Naive thymus-derived CD4-positive, alpha-beta T cell (primary cell): ENCODE measurements at regions of chr11 and their contacts with region 1.

Region 1: GRCh38 chr11:128039140-128040021 is 548.0 kb downstream of the ETS1 start:
- DNase-seq: peak; percentile 25 to 83 (median 74)
- ATAC-seq: peak; percentile 97
- H3K4me3 ChIP-seq: peak overlapping the region; percentile 38
- H3K4me3 Mint-ChIP-seq: peak overlapping the region in 9 of 10 donors; percentile 61 to 79 (median 70)
- H3K27ac ChIP-seq: peak overlapping the region; percentile 49
- H3K27ac Mint-ChIP-seq: peak overlapping the region in 8 of 9 donors; percentile 71 to 94 (median 90)
- H3K4me1 ChIP-seq: peaks cover 68 to 74% of the 10 kb centered on the region in 2 donors
- H3K4me1 Mint-ChIP-seq: peaks cover 25 to 56% (median 41%) of the 10 kb centered on the region in 7 donors
- H3K27me3 ChIP-seq: no peaks in the 10 kb centered on the region
- H3K27me3 Mint-ChIP-seq: peaks cover 0 to 3% (median 0%) of the 10 kb centered on the region in 5 donors

Region 2: GRCh38 chr11:128086794-128087193 is 47.4 kb after region 1 on chr11:
- CTCF ChIA-PET with region 1: interaction called, 37 read pairs
- POLR2A ChIA-PET with region 1: interaction called, 11 read pairs
- intact Hi-C with region 1: loop called in 1 of 2 experiments (anchors 1 kb)
- DNase-seq: peak in 5 of 9 donors; percentile 16 to 38 (median 24)
- ATAC-seq: peak; percentile 40
- H3K4me3 ChIP-seq: no peak overlapping the region
- H3K4me3 Mint-ChIP-seq: peak overlapping the region in 6 of 10 donors; percentile 2 to 55 (median 25)
- H3K27ac ChIP-seq: no peak overlapping the region
- H3K27ac Mint-ChIP-seq: peak overlapping the region in 8 of 9 donors; percentile 2 to 76 (median 58)
- H3K4me1 ChIP-seq: peaks cover 18 to 30% of the 10 kb centered on the region in 2 donors
- H3K4me1 Mint-ChIP-seq: peaks cover 0 to 52% (median 41%) of the 10 kb centered on the region in 7 donors
- H3K27me3 ChIP-seq: no peaks in the 10 kb centered on the region
- H3K27me3 Mint-ChIP-seq: peaks cover 0 to 5% (median 0%) of the 10 kb centered on the region in 5 donors

Region 3: DNA sequence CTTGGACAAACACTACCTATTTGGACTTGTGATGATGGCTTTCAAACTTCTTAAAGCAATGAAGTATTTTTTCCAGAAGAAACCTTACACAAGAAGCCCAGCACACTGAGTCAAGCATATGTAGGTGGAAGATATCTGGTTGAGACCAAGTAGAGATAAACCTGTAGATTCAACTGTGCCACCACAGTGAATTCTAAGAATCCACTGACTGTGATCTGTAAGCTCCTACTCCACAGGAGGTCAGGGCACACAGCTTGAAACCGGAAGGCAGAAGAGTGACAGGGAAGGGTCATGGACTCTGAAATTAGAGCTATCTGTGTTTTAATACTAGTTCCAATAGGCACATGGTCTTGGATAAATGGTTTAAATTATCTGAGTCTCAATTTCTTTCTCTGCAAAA is 143.5 kb after region 1 on chr11:
- CTCF ChIA-PET with region 1: no interaction called
- POLR2A ChIA-PET with region 1: no interaction called
- intact Hi-C with region 1: no loop called
- DNase-seq: no peak
- ATAC-seq: no peak
- H3K4me3 ChIP-seq: no peak overlapping the region
- H3K4me3 Mint-ChIP-seq: no peak overlapping the region
- H3K27ac ChIP-seq: no peak overlapping the region
- H3K27ac Mint-ChIP-seq: no peak overlapping the region
- H3K4me1 ChIP-seq: no peaks in the 10 kb centered on the region
- H3K4me1 Mint-ChIP-seq: peaks cover 0 to 8% (median 0%) of the 10 kb centered on the region in 7 donors
- H3K27me3 ChIP-seq: no peaks in the 10 kb centered on the region
- H3K27me3 Mint-ChIP-seq: peaks cover 0 to 4% (median 0%) of the 10 kb centered on the region in 5 donors

Region 4: GRCh38 chr11:128472128-128473089 is 433.0 kb after region 1 on chr11:
- CTCF ChIA-PET with region 1: no interaction called
- POLR2A ChIA-PET with region 1: no interaction called
- intact Hi-C with region 1: loop called (anchors 2 to 10 kb)
- DNase-seq: peak in 5 of 9 donors; percentile 38 to 77 (median 57)
- ATAC-seq: peak; percentile 17
- H3K4me3 ChIP-seq: peak overlapping the region; percentile 63
- H3K4me3 Mint-ChIP-seq: peak overlapping the region; percentile 73 to 99 (median 82)
- H3K27ac ChIP-seq: peak overlapping the region; percentile 97
- H3K27ac Mint-ChIP-seq: peak overlapping the region; percentile 92 to 100 (median 98)
- H3K4me1 ChIP-seq: peaks cover 98 to 100% of the 10 kb centered on the region in 2 donors
- H3K4me1 Mint-ChIP-seq: peaks cover 76 to 100% (median 98%) of the 10 kb centered on the region in 7 donors
- H3K27me3 ChIP-seq: no peaks in the 10 kb centered on the region
- H3K27me3 Mint-ChIP-seq: no peaks in the 10 kb centered on the region

Region 5: DNA sequence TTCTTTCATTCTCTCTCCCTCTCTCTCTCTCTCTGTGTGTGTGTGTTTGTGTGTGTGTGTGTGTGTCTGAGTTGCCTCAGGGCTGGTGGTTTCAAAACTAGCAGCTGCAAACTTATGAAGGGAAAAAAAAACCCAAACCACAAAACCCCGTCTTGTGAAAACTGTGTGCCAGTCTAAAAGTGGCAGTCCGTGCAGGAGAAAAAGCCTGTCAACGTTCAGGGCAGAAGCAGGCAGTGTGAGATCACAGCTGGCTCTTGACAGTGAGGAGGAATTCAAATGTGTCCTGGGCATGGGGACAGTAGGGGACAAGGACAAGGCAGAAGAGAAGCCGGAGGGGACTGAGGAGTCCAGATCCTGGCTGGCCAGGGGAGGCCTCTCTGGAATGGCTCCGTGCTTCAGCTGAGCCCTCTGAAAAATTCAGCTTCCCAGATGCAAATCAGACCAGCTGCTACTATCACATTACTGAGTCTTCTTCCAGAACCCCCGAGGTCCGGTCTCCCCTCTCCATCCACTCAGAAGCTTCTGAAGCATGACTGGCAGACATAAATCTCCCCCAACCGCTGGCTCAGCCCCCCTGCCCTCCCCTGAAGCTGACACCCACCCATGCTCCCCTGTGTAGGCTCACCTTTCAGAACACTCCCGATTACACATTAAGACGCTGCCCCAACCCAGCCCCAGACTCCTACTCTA is 686.4 kb after region 1 on chr11:
- CTCF ChIA-PET with region 1: no interaction called
- POLR2A ChIA-PET with region 1: no interaction called
- intact Hi-C with region 1: loop called in 1 of 2 experiments (anchors 10 kb)
- DNase-seq: peak; percentile 32 to 90 (median 86)
- ATAC-seq: peak; percentile 76
- H3K4me3 ChIP-seq: peak overlapping the region; percentile 62
- H3K4me3 Mint-ChIP-seq: peak overlapping the region; percentile 70 to 96 (median 86)
- H3K27ac ChIP-seq: peak overlapping the region; percentile 65
- H3K27ac Mint-ChIP-seq: peak overlapping the region; percentile 71 to 98 (median 92)
- H3K4me1 ChIP-seq: peaks cover 96 to 99% of the 10 kb centered on the region in 2 donors
- H3K4me1 Mint-ChIP-seq: peaks cover 90 to 100% (median 97%) of the 10 kb centered on the region in 7 donors
- H3K27me3 ChIP-seq: no peaks in the 10 kb centered on the region
- H3K27me3 Mint-ChIP-seq: no peaks in the 10 kb centered on the region

Region 6: GRCh38 chr11:128831174-128832120 is 792.1 kb after region 1 on chr11:
- CTCF ChIA-PET with region 1: no interaction called
- POLR2A ChIA-PET with region 1: interaction called, 3 read pairs
- intact Hi-C with region 1: loop called (anchors 2 kb)
- DNase-seq: peak; percentile 68 to 85 (median 80)
- ATAC-seq: peak; percentile 90
- H3K4me3 ChIP-seq: peak overlapping the region; percentile 43
- H3K4me3 Mint-ChIP-seq: peak overlapping the region; percentile 61 to 87 (median 76)
- H3K27ac ChIP-seq: peak overlapping the region; percentile 67
- H3K27ac Mint-ChIP-seq: peak overlapping the region; percentile 58 to 98 (median 89)
- H3K4me1 ChIP-seq: peaks cover 11 to 15% of the 10 kb centered on the region in 2 donors
- H3K4me1 Mint-ChIP-seq: peaks cover 15 to 35% (median 24%) of the 10 kb centered on the region in 7 donors
- H3K27me3 ChIP-seq: no peaks in the 10 kb centered on the region
- H3K27me3 Mint-ChIP-seq: peaks cover 0 to 4% (median 0%) of the 10 kb centered on the region in 5 donors

Region 7: GRCh38 chr11:128905345-128906184 is 866.2 kb after region 1 on chr11:
- CTCF ChIA-PET with region 1: no interaction called
- POLR2A ChIA-PET with region 1: no interaction called
- intact Hi-C with region 1: loop called in 1 of 2 experiments (anchors 5 kb)
- DNase-seq: peak in 7 of 9 donors; percentile 27 to 51 (median 46)
- ATAC-seq: peak; percentile 73
- H3K4me3 ChIP-seq: peak overlapping the region; percentile 62
- H3K4me3 Mint-ChIP-seq: peak overlapping the region; percentile 79 to 89 (median 82)
- H3K27ac ChIP-seq: no peak overlapping the region
- H3K27ac Mint-ChIP-seq: peak overlapping the region in 2 of 9 donors; percentile 13 to 59
- H3K4me1 ChIP-seq: peaks cover 0 to 3% of the 10 kb centered on the region in 2 donors
- H3K4me1 Mint-ChIP-seq: peaks cover 7 to 24% (median 11%) of the 10 kb centered on the region in 7 donors
- H3K27me3 ChIP-seq: peaks cover 4 to 5% of the 10 kb centered on the region in 2 donors
- H3K27me3 Mint-ChIP-seq: peaks cover 8 to 88% (median 29%) of the 10 kb centered on the region in 5 donors